IMR-90 (cell line): ENCODE measurements at regions of chr15 and their contacts with region 1.

Region 1: GRCh38 chr15:75091814-75092213 is 68.4 kb downstream of the PPCDC start:
- DNase-seq: no peak
- ATAC-seq: no peak
- H3K4me3 ChIP-seq: no peak overlapping the region
- H3K27ac ChIP-seq: no peak overlapping the region
- H3K4me1 ChIP-seq: no peaks in the 10 kb centered on the region
- H3K27me3 ChIP-seq: peaks cover 2% of the 10 kb centered on the region
- CTCF ChIP-seq: no peak
- POLR2A ChIP-seq: no peak
- RAD21 ChIP-seq: no peak

Region 2: DNA sequence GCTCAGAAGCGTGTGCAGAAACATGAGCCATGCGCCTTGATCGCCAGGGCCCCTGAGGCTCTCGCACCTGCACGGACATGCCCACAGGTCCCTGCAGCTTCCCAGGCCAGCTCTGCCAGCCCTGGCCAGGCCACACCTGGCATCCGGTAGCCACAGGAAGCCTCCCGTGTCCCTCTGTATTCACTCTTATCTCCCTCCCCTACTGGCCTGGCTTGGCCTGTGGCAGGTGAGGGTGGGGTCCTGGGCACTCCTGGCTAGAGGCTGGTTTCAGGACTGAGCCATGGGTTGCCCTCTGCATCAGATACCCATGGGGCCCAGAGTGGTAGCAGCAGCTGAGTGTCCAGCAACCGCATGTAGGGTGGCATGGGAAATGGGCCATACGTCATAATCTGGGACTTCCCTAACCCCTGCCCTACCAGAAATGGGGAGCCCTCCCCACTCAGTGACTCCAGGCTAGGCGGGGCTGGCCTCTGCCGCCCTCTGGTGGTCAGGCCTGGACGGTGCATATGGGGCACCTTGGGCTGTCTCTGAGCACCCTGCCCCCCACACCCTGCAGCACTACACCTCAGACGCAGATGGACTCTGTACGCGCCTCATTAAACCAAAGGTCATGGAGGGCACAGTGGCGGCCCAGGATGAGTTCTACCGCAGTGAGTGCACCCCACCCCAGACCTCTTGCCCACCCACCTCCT is 291.8 kb before region 1 on chr15:
- CTCF ChIA-PET with region 1: no interaction called
- POLR2A ChIA-PET with region 1: no interaction called
- dilution Hi-C with region 1: no loop called
- in situ Hi-C with region 1: no loop called
- intact Hi-C with region 1: no loop called
- DNase-seq: peak; percentile 52
- ATAC-seq: peak; percentile 99
- H3K4me3 ChIP-seq: no peak overlapping the region
- H3K27ac ChIP-seq: no peak overlapping the region
- H3K4me1 ChIP-seq: peaks cover 2% of the 10 kb centered on the region; the same call in 1 of the 2 replicates
- H3K27me3 ChIP-seq: no peaks in the 10 kb centered on the region
- CTCF ChIP-seq: peak; percentile 93
- POLR2A ChIP-seq: 0 out of 2 replicates have a peak, but pooled peaks have one; percentile 28
- RAD21 ChIP-seq: peak; percentile 89

Region 3: GRCh38 chr15:75104804-75105535 is 13.2 kb after region 1 on chr15:
- CTCF ChIA-PET with region 1: no interaction called
- POLR2A ChIA-PET with region 1: no interaction called
- dilution Hi-C with region 1: no loop called
- in situ Hi-C with region 1: no loop called
- intact Hi-C with region 1: no loop called
- DNase-seq: peak; percentile 83
- ATAC-seq: peak; percentile 74
- H3K4me3 ChIP-seq: no peak overlapping the region
- H3K27ac ChIP-seq: no peak overlapping the region
- H3K4me1 ChIP-seq: peaks cover 9% of the 10 kb centered on the region
- H3K27me3 ChIP-seq: peaks cover 2% of the 10 kb centered on the region; the same call in 1 of the 2 replicates
- CTCF ChIP-seq: no peak
- POLR2A ChIP-seq: no peak
- RAD21 ChIP-seq: no peak

Region 4: GRCh38 chr15:75178171-75179075 is 86.6 kb after region 1 on chr15:
- CTCF ChIA-PET with region 1: no interaction called
- POLR2A ChIA-PET with region 1: interaction called, 10 read pairs
- dilution Hi-C with region 1: no loop called
- in situ Hi-C with region 1: no loop called
- intact Hi-C with region 1: no loop called
- DNase-seq: no peak
- ATAC-seq: peak; percentile 8; the same call in 1 of the 2 replicates
- H3K4me3 ChIP-seq: no peak overlapping the region
- H3K27ac ChIP-seq: no peak overlapping the region
- H3K4me1 ChIP-seq: peaks cover 27% of the 10 kb centered on the region
- H3K27me3 ChIP-seq: peaks cover 11% of the 10 kb centered on the region
- CTCF ChIP-seq: no peak
- POLR2A ChIP-seq: no peak
- RAD21 ChIP-seq: no peak